GM12878 (cell line): ENCODE measurements at regions of chr11 and their contacts with region 1.

Region 1: DNA sequence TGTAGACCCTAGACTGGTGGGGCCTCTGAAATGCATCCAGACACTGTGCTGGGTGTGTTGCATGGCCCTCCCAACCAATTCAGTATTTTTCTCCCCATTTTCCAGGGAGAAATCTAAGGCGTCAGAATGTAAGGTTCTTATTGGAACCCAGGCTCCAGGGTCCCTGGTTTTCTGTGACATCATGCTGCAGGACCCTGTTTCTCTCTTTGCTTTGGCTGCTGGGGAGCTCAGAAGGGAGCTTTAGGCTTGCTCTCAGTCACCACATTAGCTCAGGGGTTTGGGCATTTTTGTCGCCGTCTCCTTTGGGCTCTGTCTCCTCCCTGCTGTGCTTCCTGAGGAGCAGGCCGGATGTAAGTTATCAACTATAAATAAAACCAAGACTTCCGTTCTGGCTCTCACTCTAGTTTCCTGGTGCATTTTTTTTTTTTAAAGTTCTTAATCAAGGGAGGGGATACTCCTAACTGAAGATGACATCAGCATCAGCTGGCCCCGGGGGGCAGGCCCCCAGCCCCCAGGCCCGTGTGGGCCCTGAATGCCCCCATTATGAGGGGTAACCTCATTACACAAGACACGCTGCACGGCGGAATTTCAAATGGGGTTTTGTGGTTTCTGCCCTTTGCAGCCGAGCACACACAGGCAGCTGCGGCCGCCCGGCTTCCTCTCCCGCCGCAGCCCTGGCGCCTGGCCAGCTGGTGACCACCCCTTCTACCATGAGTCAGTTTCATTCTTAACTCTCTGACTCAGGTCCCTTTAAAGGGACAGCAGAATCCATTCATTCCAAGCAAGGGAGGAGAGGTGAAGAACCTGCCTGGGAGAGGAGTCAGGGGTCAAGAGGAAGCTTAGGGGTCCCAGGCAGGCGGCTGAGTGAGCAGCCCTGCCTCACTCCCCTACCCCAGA is 3.2 kb downstream of the MYEOV start:
- DNase-seq: peak; percentile 91
- ATAC-seq: peak; percentile 66
- H3K4me3 ChIP-seq: peak overlapping the region; percentile 38; the same call in 1 of the 2 replicates
- H3K27ac ChIP-seq: peak overlapping the region; percentile 89
- H3K4me1 ChIP-seq: peaks cover 32% of the 10 kb centered on the region
- H3K27me3 ChIP-seq: no peaks in the 10 kb centered on the region
- CTCF ChIP-seq: no peak
- EP300 ChIP-seq: peak; percentile 78 to 90; a peak in 3 of 4 replicates
- POLR2A ChIP-seq: no peak
- RAD21 ChIP-seq: 0 out of 2 replicates have a peak, but pooled peaks have one; percentile 5

Region 2: GRCh38 chr11:68843703-68844312 is 453.3 kb before region 1 on chr11:
- CTCF ChIA-PET with region 1: no interaction called
- POLR2A ChIA-PET with region 1: no interaction called
- RAD21 ChIA-PET with region 1: no interaction called
- SMC1A ChIA-PET with region 1: no interaction called
- in situ Hi-C with region 1: no loop called
- intact Hi-C with region 1: loop called (anchors 5 kb)
- DNase-seq: no peak
- ATAC-seq: peak; percentile 82
- H3K4me3 ChIP-seq: peak overlapping the region; percentile 85
- H3K27ac ChIP-seq: peak overlapping the region; percentile 36
- H3K4me1 ChIP-seq: peaks cover 25% of the 10 kb centered on the region
- H3K27me3 ChIP-seq: no peaks in the 10 kb centered on the region
- CTCF ChIP-seq: peak; percentile 65 to 80 (median 75)
- EP300 ChIP-seq: no peak
- POLR2A ChIP-seq: peak; percentile 55
- RAD21 ChIP-seq: peak; percentile 80

Region 3: GRCh38 chr11:69157156-69157821 is 139.8 kb before region 1 on chr11:
- CTCF ChIA-PET with region 1: interaction called, 7 read pairs
- POLR2A ChIA-PET with region 1: interaction called, 5 read pairs
- RAD21 ChIA-PET with region 1: interaction called, 8 read pairs
- SMC1A ChIA-PET with region 1: interaction called, 16 read pairs
- in situ Hi-C with region 1: no loop called
- intact Hi-C with region 1: no loop called
- DNase-seq: no peak
- ATAC-seq: peak; percentile 66
- H3K4me3 ChIP-seq: peak overlapping the region; percentile 57; the same call in 1 of the 2 replicates
- H3K27ac ChIP-seq: peak overlapping the region; percentile 76
- H3K4me1 ChIP-seq: peaks cover 32% of the 10 kb centered on the region
- H3K27me3 ChIP-seq: no peaks in the 10 kb centered on the region
- CTCF ChIP-seq: no peak
- EP300 ChIP-seq: no peak
- POLR2A ChIP-seq: no peak
- RAD21 ChIP-seq: no peak

Region 4: DNA sequence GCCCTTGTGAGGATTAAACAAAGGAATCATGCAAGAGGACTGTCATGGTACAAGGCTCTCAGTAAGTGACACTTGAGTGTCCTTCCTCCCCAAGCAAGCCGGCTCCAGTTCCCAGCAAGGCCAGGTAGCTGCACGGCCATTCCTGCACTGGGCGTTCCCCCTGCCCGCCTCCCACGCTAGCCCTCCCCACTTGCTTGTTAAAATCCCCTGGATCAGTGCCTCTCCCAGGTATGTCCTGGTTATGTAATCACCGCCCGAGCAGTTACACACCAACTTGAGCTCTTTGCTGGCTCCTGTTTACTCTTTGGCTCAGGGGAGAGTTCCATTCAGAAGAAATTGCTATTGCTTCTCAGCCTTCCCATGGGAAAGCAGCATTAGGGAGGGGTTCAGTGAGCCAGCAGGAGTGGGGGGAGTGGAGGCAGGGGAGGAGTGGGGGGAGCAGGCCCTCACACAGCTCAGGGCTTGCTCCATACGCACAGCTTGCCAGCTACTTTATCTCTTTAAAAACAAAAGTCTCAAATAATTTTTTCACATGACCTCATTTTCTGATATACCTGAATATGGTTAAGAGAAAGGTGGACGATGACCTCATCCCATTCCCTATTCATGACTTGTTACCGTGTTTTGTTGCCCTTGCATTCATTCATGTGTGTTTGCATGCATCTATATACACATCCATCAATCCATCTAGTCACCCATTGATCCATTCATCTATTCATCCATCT is 22.4 kb before region 1 on chr11:
- CTCF ChIA-PET with region 1: interaction called, 12 read pairs
- POLR2A ChIA-PET with region 1: interaction called, 5 read pairs
- RAD21 ChIA-PET with region 1: interaction called, 28 read pairs
- SMC1A ChIA-PET with region 1: interaction called, 11 read pairs
- in situ Hi-C with region 1: no loop called
- intact Hi-C with region 1: loop called (anchors 1 kb)
- DNase-seq: no peak
- ATAC-seq: no peak
- H3K4me3 ChIP-seq: no peak overlapping the region
- H3K27ac ChIP-seq: no peak overlapping the region
- H3K4me1 ChIP-seq: peaks cover 19% of the 10 kb centered on the region
- H3K27me3 ChIP-seq: no peaks in the 10 kb centered on the region
- CTCF ChIP-seq: no peak
- EP300 ChIP-seq: no peak
- POLR2A ChIP-seq: no peak
- RAD21 ChIP-seq: no peak

Region 5: GRCh38 chr11:69337211-69337721 is 40.1 kb after region 1 on chr11:
- CTCF ChIA-PET with region 1: interaction called, 5 read pairs
- POLR2A ChIA-PET with region 1: interaction called, 6 read pairs
- RAD21 ChIA-PET with region 1: interaction called, 26 read pairs
- SMC1A ChIA-PET with region 1: interaction called, 26 read pairs
- in situ Hi-C with region 1: no loop called
- intact Hi-C with region 1: no loop called
- DNase-seq: peak; percentile 66
- ATAC-seq: peak; percentile 98
- H3K4me3 ChIP-seq: no peak overlapping the region; the same call in 1 of the 2 replicates
- H3K27ac ChIP-seq: peak overlapping the region; percentile 39
- H3K4me1 ChIP-seq: peaks cover 12% of the 10 kb centered on the region
- H3K27me3 ChIP-seq: no peaks in the 10 kb centered on the region
- CTCF ChIP-seq: no peak
- EP300 ChIP-seq: peak in 1 of 2 experiments; percentile 57; a peak in 1 of 4 replicates
- POLR2A ChIP-seq: no peak
- RAD21 ChIP-seq: no peak

Region 6: DNA sequence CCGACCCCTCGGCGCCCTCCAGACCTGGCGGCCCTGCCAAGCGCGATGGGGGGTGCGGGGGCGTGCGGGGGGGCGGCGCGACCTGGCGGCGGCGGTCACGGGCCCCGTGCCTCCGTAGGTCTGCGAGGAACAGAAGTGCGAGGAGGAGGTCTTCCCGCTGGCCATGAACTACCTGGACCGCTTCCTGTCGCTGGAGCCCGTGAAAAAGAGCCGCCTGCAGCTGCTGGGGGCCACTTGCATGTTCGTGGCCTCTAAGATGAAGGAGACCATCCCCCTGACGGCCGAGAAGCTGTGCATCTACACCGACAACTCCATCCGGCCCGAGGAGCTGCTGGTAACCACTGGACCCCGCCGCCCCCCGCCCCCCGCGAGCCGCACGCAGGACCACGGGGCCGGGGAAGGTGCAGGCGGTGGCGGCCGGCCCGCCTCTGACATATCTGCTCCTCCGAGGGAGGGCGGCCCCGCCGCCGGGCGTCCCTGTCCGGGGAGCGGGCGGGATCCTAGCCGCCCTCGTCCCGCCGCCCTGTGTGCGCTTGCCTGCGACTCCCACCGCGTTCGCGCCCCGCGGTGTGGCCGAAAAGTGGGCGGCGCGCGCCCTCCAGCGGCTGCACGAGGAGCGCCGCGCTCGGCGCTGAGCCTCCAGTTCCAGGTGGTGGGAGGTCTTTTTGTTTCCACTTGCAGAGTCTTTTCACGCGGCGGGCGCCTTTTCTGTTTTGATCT is 345.9 kb after region 1 on chr11:
- CTCF ChIA-PET with region 1: interaction called, 32 read pairs
- POLR2A ChIA-PET with region 1: interaction called, 4 read pairs
- RAD21 ChIA-PET with region 1: interaction called, 10 read pairs
- SMC1A ChIA-PET with region 1: interaction called, 10 read pairs
- in situ Hi-C with region 1: loop called (anchors 5 kb)
- intact Hi-C with region 1: loop called (anchors 1 kb)
- DNase-seq: no peak
- ATAC-seq: peak; percentile 85
- H3K4me3 ChIP-seq: peak overlapping the region; percentile 71; the same call in 1 of the 2 replicates
- H3K27ac ChIP-seq: no peak overlapping the region
- H3K4me1 ChIP-seq: peaks cover 13% of the 10 kb centered on the region
- H3K27me3 ChIP-seq: peaks cover 10 to 23% of the 10 kb centered on the region in 2 experiments
- CTCF ChIP-seq: peak; percentile 87 to 92 (median 88)
- EP300 ChIP-seq: no peak
- POLR2A ChIP-seq: no peak
- RAD21 ChIP-seq: peak; percentile 98